ENCODE measurements at regions of chr14 and their contacts with region 1.

Region 1: DNA sequence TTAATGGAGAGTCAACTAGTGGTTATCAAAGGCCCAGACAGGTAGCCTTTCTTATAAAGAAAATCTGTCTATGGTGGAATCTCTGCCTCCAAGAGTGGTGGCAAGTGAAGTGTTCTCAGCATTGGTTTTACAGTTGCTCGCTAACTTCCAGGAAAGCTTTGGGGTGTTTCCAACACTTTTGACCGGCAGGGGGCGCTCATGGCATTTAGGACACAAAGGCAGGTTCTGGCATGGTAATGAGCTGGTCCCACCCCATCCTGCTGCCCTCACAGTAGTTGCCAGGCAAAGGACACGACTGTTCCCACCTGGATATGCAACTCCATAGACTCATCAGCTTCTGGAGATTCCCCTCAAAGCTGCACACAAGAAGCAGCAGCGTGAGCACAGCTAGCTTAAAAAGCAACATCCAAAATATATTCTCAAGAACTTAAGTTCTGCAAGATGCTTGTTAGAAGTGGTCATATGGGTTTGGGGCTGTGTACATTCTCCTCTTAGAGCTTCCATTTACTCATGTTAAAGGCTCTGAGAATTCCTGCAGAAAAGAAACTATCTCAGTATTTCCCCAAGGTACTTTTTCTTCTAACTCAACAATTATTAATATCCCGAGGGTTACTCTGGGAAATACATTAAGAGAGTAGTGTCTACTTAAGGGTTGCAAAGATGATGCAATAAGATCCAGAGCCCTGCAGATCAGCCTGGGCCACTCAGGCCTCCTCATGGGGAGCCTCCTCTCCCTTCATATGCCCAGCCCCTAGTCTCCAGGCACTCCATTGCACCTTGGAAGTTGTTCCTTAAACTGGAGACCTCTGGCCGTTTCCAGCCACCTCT is 14.8 kb downstream of the PROX2 start:
- DNase-seq: peak; percentile 89
- H3K4me3 Mint-ChIP-seq: no peak overlapping the region
- H3K27ac Mint-ChIP-seq: no peak overlapping the region
- H3K4me1 Mint-ChIP-seq: no peaks in the 10 kb centered on the region
- H3K27me3 Mint-ChIP-seq: peaks cover 11% of the 10 kb centered on the region
- CTCF ChIP-seq: peak; percentile 76

Region 2: GRCh38 chr14:74871819-74872218 is 10.7 kb after region 1 on chr14:
- CTCF ChIA-PET with region 1: interaction called, 11 read pairs
- intact Hi-C with region 1: no loop called
- DNase-seq: no peak
- H3K4me3 Mint-ChIP-seq: no peak overlapping the region
- H3K27ac Mint-ChIP-seq: no peak overlapping the region
- H3K4me1 Mint-ChIP-seq: no peaks in the 10 kb centered on the region
- H3K27me3 Mint-ChIP-seq: peaks cover 11% of the 10 kb centered on the region
- CTCF ChIP-seq: no peak

Region 3: DNA sequence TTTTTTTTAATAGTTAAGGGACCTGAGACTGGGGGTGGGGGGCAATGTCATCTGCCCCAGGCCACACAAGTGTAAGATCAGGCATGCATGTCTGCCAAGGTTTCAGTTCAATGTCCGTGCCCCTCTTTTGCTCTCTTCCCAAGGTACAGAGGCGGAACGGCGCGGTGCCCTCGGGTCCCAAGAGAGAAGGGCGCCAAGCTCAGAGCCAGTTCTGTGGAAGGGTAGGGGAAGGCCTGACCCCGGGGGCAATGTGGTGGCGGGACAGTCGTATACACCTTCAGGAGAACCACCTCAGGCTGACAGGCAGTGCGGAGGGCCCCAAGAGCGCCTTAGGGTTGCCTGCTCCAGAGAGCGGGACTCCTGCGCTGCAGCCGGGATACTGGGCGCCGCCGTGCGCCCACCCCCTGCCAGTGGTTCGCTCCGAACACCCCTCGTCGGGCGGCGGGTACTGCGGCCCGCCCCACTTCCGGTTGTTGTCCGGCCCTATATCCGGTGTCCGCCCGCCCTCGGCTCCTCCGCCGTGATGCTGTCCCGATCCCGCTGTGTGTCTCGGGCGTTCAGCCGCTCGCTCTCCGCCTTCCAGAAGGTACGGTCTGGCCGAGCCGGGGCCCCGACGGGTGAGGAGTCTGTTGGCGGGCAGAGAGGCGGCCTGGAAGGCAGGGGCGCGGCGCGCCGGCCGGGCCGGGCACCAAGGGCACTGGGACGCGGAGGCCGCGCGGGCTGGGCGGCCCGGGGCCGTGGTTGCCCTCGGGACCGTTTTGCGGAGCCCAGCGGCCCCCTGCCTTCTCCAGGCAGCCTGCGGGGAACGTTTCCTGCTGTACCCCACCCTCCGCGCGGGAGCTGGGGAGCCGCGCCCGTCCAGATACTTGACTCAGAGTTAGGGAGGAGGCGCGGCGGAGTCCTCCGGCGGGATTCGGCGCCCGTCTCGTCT is 20.6 kb after region 1 on chr14 and contains the start of gene DLST:
- CTCF ChIA-PET with region 1: interaction called, 12 read pairs
- intact Hi-C with region 1: no loop called
- DNase-seq: peak; percentile 92
- H3K4me3 Mint-ChIP-seq: peak within 1 kb of the TSS; percentile 95
- H3K27ac Mint-ChIP-seq: peak within 1 kb of the TSS; percentile 92
- H3K4me1 Mint-ChIP-seq: peaks cover 49% of the 10 kb centered on the region
- H3K27me3 Mint-ChIP-seq: no peaks in the 10 kb centered on the region
- CTCF ChIP-seq: no peak
- total RNA-seq, gene DLST: 84.2 and 89.1 TPM in 2 replicates

Region 4: DNA sequence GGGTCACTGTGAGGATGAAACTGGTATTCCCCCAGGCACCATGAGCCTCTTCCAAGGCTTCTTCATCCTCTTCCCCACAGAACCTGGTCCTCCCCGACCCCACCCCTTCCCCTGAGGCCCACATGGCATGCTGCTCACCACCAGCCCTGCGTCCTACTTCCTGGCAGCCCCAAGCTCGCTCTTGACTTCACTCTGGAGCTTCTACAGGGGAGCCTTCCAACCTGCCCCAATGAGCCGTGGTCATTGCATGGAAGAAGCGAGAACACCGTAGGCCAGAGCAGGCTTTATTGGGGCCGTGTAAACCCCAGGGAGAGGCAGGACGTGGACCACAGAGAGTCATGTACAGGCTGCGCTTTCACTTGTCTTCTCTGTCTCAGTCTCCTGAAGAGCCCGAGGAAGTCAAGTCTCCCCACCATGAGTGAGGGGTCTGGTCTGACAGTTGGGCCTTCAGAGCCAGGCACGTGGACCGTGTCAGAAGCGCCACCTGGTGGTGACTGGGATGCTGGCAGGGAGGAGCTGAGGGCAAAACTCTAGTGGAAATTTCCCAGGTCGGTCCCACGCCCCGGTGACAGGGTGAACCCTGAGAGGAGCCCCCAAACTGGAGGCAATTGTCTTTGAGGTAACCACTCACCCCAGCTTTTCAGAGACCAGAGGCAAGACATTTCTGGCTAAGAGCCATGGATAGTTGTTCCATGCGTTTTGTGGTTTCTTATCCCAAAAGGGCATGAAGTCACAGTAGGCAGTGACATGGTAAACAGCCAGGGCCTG is 44.4 kb after region 1 on chr14:
- CTCF ChIA-PET with region 1: interaction called, 29 read pairs
- intact Hi-C with region 1: loop called (anchors 1 kb)
- DNase-seq: peak; percentile 78
- H3K4me3 Mint-ChIP-seq: no peak overlapping the region
- H3K27ac Mint-ChIP-seq: no peak overlapping the region
- H3K4me1 Mint-ChIP-seq: no peaks in the 10 kb centered on the region
- H3K27me3 Mint-ChIP-seq: no peaks in the 10 kb centered on the region
- CTCF ChIP-seq: peak; percentile 90

Region 5: GRCh38 chr14:75044322-75044721 is 183.2 kb after region 1 on chr14:
- CTCF ChIA-PET with region 1: no interaction called
- intact Hi-C with region 1: no loop called
- DNase-seq: no peak
- H3K4me3 Mint-ChIP-seq: no peak overlapping the region
- H3K27ac Mint-ChIP-seq: no peak overlapping the region
- H3K4me1 Mint-ChIP-seq: peaks cover 39% of the 10 kb centered on the region
- H3K27me3 Mint-ChIP-seq: no peaks in the 10 kb centered on the region
- CTCF ChIP-seq: no peak

Region 6: DNA sequence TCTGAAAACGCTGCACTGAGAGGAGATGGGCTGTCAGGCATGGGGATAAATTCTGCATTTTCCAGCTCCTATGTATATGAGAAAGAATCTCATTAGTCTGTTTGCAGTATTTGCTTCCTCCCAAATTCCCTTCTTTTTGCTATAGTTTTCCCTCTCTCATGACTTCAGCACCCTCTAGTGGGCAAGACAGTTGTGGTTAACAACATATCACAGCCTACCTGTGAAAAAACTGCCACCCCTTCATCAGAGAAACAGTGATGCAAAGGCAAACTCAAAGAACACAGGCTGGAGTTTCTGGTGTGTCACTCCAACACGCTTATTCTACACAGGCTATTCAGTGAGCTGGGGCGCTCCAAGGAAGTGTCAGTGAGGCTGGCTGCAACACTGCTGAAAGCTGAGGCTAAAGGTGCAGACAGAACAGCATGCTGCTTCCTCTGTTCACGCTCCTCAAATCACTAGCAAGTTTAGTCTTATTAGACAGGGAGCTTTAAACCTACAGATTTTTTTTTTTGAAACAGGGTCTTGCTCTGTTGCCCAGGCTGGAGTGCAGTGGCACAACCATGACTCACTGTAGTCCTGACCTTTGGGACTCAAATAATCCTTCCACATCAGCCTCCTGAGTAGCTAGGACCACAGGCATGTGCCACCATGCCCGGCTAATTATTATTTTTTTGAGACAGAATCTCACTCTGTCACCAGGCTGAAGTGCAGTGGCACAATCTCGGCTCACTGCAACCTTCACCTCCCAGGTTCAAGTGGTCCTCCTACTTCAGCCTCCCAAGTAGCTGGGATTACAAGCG is 227.7 kb after region 1 on chr14:
- CTCF ChIA-PET with region 1: interaction called, 15 read pairs
- intact Hi-C with region 1: loop called (anchors 2 kb)
- DNase-seq: peak; percentile 64
- H3K4me3 Mint-ChIP-seq: no peak overlapping the region
- H3K27ac Mint-ChIP-seq: no peak overlapping the region
- H3K4me1 Mint-ChIP-seq: no peaks in the 10 kb centered on the region
- H3K27me3 Mint-ChIP-seq: no peaks in the 10 kb centered on the region
- CTCF ChIP-seq: peak; percentile 68